ENCODE measurements at regions of chr1 and their contacts with region 1.

Region 1: GRCh38 chr1:114282751-114283403 is 129.2 kb upstream of the SYT6 start:
- DNase-seq: peak; percentile 88
- ATAC-seq: peak; percentile 99
- H3K4me3 ChIP-seq: no peak overlapping the region
- H3K27ac ChIP-seq: no peak overlapping the region
- H3K4me1 ChIP-seq: no peaks in the 10 kb centered on the region
- H3K27me3 ChIP-seq: no peaks in the 10 kb centered on the region
- CTCF ChIP-seq: peak; percentile 90

Region 2: DNA sequence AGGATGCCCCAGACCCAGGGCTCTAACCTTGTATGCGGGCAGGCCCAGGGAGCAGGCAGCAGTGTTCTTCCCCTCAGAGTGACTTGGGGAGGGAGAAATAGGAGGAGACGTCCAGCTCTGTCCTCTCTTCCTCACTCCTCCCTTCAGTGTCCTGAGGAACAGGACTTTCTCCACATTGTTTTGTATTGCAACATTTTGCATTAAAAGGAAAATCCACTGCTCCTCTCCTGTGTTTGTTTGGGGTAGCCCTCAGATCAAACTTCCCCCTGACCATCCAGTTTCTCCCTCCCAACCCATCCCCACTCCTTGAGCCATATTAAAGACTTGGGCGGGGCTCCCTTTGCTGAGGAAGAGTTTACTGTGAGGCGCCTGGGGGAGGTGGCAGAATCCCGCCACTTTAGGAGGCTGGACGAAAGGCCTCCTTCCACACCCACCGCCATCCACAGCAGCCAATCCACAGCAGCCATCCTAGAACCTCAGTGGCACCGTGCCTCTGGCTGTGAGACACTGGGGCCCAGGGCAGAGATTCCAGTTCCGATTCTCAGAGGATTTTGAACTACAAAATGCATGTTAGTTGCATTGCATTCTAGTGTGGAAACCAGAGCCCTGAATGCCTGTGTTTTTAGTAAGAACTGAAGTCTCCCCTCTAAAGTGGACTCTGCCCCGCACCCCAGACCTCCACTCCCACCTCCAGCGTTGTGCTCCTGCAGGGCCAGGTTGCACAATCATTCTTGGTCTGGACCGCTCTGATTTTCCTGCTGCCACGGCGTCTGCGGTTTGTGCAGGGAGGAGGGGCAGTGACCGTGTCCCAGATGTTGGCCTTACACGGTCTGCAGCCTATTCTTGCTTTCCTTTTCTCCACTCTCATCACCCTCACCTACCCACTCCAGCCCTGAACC is 300.6 kb before region 1 on chr1:
- intact Hi-C with region 1: loop called (anchors 5 kb)
- DNase-seq: peak; percentile 72
- ATAC-seq: peak; percentile 60
- H3K4me3 ChIP-seq: peak overlapping the region; percentile 28
- H3K27ac ChIP-seq: peak overlapping the region; percentile 66
- H3K4me1 ChIP-seq: peaks cover 19% of the 10 kb centered on the region
- H3K27me3 ChIP-seq: no peaks in the 10 kb centered on the region
- CTCF ChIP-seq: no peak

Region 3: DNA sequence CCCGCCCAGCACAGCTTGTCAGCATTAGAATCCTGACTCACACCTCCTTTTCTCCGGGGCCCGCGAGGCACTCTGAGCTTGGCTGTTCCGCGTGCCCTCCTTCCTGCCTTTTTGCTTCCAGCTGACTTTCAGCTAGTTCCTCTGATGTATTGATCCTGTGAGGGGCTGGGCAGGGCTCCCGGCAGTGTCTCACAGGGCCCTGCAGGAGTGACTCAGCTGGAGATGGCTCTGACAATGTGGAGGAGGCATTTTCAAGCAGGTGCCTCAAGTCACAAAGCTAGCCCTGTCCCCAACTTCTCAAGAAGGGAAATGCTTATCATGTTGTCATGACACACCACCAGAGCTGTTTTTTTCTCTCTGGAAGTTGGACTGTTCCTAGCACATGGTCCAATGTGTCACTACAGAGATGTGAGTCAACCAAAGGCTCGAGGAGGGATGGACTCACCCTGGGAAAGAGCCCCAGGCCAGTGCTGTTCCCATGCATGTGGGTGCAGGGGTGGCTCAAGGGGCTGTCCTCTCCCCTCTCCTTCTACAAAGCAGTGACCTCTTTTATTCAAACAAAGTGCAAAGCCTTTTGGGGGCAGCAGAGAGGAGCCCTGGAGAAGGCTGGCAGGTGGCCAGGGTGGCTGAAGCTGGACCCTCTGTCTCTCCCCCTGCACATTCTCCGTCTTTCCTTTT is 159.8 kb before region 1 on chr1:
- intact Hi-C with region 1: no loop called
- DNase-seq: no peak
- ATAC-seq: no peak
- H3K4me3 ChIP-seq: no peak overlapping the region
- H3K27ac ChIP-seq: no peak overlapping the region
- H3K4me1 ChIP-seq: no peaks in the 10 kb centered on the region
- H3K27me3 ChIP-seq: no peaks in the 10 kb centered on the region
- CTCF ChIP-seq: no peak

Region 4: GRCh38 chr1:114234408-114235124 is 48.3 kb before region 1 on chr1:
- intact Hi-C with region 1: no loop called
- DNase-seq: no peak
- ATAC-seq: peak; percentile 74
- H3K4me3 ChIP-seq: no peak overlapping the region
- H3K27ac ChIP-seq: no peak overlapping the region
- H3K4me1 ChIP-seq: no peaks in the 10 kb centered on the region
- H3K27me3 ChIP-seq: no peaks in the 10 kb centered on the region
- CTCF ChIP-seq: no peak